IMR-90 (cell line): ENCODE measurements at regions of chr1 and their contacts with region 1.

Region 1: DNA sequence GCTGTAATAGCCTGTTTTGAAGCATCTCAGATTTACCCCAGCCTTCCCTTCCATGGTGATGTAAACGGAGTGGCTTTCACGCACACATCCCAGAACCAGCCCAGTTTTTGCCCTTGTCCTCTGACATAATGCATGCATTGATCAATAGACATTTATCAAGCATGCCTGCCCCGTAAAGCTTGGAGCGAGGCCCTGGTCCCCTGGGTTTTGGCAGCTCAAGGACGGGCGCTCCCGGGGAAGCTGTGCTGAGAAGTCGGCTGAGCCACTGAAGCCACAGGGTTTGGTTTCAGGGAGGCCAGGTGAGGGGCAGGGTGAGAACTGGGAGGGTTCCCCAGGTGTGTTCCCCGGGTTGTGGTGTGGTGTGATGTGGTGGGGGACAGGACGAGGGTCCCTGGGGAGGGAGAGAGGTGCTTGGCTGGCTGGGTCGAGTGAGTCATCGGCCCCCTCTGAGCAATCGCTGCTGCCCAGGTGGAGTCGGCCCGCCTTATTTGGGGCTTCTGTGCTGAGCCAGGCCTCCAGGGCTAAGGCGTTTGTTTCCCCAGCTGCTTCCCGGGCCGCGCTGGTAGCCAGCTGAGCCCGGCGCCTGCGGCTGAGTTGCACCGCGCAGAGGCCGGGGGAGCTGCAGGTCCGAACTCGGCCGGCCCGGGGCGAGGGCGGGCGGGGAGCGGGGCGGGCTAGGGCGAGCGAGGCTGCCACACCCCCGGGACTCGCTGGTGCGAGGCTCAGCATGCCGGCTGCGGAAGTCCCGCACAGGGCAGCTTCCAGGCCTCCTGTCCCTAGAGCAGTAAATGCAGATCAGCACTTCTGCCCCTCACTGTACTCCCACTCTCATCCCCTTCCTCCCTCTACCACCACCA is 23.6 kb downstream of the ATP2B4 start:
- DNase-seq: peak; percentile 74
- ATAC-seq: peak; percentile 83
- H3K4me3 ChIP-seq: no peak overlapping the region
- H3K27ac ChIP-seq: peak overlapping the region; percentile 37
- H3K4me1 ChIP-seq: peaks cover 26% of the 10 kb centered on the region
- H3K27me3 ChIP-seq: no peaks in the 10 kb centered on the region
- CTCF ChIP-seq: no peak
- POLR2A ChIP-seq: no peak
- RAD21 ChIP-seq: no peak

Region 2: DNA sequence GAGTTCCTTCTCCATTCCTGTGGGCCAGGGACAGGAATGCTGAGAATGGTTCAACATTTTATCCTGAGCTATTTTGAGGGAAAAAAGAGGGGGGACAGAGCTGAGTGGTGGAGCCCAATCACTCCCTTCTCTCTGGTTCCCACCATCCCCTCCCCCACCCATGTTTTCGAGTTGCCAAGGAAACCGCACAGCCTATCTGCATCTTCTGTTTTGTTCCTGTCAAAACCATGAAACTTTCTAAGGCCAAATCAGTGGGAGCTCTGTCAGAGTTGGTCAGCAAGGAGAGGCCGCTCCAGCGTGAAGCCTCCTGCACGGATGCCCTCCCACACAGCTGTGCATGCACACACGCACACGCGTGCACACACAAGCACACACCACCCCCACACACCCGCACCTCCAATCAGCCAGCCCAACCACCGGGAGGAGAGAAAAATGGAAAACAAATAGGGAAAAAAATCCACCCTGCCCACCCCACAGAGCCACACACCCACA is 78.0 kb before region 1 on chr1:
- CTCF ChIA-PET with region 1: no interaction called
- POLR2A ChIA-PET with region 1: no interaction called
- dilution Hi-C with region 1: no loop called
- in situ Hi-C with region 1: no loop called
- intact Hi-C with region 1: no loop called
- DNase-seq: peak; percentile 55
- ATAC-seq: peak; percentile 52
- H3K4me3 ChIP-seq: no peak overlapping the region
- H3K27ac ChIP-seq: no peak overlapping the region
- H3K4me1 ChIP-seq: peaks cover 20% of the 10 kb centered on the region
- H3K27me3 ChIP-seq: no peaks in the 10 kb centered on the region
- CTCF ChIP-seq: no peak
- POLR2A ChIP-seq: no peak
- RAD21 ChIP-seq: no peak

Region 3: GRCh38 chr1:203672346-203672745 is 22.1 kb after region 1 on chr1:
- CTCF ChIA-PET with region 1: no interaction called
- POLR2A ChIA-PET with region 1: interaction called, 18 read pairs
- dilution Hi-C with region 1: no loop called
- in situ Hi-C with region 1: no loop called
- intact Hi-C with region 1: no loop called
- DNase-seq: peak; percentile 88
- ATAC-seq: peak; percentile 51
- H3K4me3 ChIP-seq: no peak overlapping the region
- H3K27ac ChIP-seq: peak overlapping the region; percentile 9; the same call in 1 of the 2 replicates
- H3K4me1 ChIP-seq: peaks cover 53% of the 10 kb centered on the region
- H3K27me3 ChIP-seq: no peaks in the 10 kb centered on the region
- CTCF ChIP-seq: no peak
- POLR2A ChIP-seq: no peak
- RAD21 ChIP-seq: no peak